Mucosa of descending colon (tissue), 3 donors: ENCODE measurements at regions of chr13 and their contacts with region 1.

Region 1: GRCh38 chr13:31424117-31424729 is 224.4 kb downstream of the B3GLCT start:
- DNase-seq: peak; percentile 53 to 87 (median 82)
- ATAC-seq: peak; percentile 95
- H3K4me3 ChIP-seq: no peak overlapping the region
- H3K4me1 ChIP-seq: no peaks in the 10 kb centered on the region
- CTCF ChIP-seq: peak; percentile 75

Region 2: GRCh38 chr13:31236211-31236786 is 187.9 kb before region 1 on chr13:
- intact Hi-C with region 1: loop called (anchors 10 kb)
- DNase-seq: peak in 1 of 3 donors; percentile 68
- ATAC-seq: peak; percentile 60
- H3K4me3 ChIP-seq: no peak overlapping the region
- H3K4me1 ChIP-seq: no peaks in the 10 kb centered on the region
- CTCF ChIP-seq: peak; percentile 24

Region 3: DNA sequence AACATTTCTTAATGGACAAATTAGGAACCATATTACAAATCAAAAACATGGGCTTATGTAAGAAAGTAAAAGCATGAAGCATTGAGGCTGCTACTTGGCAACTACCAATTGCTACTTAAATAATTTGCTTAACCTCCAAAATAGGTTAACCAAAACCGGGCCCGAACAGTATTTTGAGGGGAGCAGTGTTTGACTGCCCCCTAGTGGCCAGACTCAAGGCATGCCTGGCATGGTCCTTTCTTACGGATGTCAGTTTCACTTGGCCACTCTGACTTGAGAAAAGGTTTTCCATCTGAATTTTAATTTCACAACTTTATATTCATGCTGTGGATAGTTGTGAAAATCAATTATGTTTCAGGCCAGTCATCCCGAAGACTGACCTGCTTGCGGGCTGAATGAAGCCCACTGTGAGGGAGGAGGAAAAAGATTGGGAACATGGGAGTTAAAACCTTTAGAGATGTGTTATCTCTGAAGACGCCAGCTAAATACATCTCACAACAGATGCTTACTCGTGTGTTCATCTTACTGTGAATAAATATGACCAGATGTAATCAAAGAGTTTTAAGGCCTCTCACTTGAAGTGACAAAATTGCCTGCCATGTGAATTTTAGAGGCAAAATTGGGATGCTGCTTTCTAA is 318.0 kb after region 1 on chr13:
- intact Hi-C with region 1: loop called in 1 of 2 experiments (anchors 5 kb)
- DNase-seq: peak in 2 of 3 donors; percentile 45 to 73
- ATAC-seq: peak; percentile 78
- H3K4me3 ChIP-seq: no peak overlapping the region
- H3K4me1 ChIP-seq: no peaks in the 10 kb centered on the region
- CTCF ChIP-seq: peak; percentile 90

Region 4: DNA sequence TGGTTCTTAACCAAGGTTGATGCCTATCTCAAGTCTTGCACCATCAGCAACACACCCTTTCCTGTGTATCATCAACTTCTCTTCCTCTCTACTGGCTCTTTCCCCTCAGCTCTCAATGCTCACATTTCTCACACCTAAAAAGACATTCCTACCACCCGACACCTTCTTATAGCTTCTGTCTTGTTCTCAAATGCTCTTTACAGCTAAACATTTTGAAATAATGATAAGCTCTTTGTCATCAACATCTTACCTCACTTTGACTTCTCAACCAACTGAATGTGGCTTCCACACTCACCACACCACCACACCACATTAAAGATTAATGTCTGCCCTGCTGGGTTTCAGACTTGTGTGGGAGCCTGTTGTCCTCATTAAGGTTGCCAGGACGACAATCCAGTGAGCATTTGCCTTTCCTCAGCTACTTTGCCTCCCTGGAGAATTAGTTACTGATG is 382.9 kb after region 1 on chr13:
- intact Hi-C with region 1: no loop called
- DNase-seq: no peak
- ATAC-seq: no peak
- H3K4me3 ChIP-seq: no peak overlapping the region
- H3K4me1 ChIP-seq: no peaks in the 10 kb centered on the region
- CTCF ChIP-seq: no peak